MCF 10A (cell line): ENCODE measurements at regions of chr2 and their contacts with region 1.

Region 1: DNA sequence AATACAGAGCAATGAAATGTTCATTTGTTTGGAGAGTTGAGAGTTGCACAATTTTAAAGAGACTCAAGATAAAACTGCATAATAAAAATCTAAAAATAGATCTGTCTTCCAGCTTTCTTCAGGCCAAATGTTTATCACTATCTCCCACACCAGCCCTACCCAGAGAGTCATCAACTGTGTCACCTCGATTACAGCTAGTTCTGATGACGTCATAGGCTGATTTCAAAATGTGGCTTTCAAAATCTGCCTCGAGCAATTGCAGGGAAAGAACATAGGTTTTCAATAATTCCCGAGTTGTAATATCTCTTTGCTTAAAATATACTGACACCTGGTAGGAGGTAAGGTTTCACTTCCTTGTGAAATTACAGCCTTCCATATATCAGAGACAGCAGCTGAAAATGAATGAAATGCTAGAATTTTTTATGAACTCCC is 677.6 kb upstream of the ID2 start:
- DNase-seq: peak; percentile 83
- H3K4me3 Mint-ChIP-seq: no peak overlapping the region
- H3K27ac Mint-ChIP-seq: peak overlapping the region; percentile 76
- H3K4me1 Mint-ChIP-seq: peaks cover 15% of the 10 kb centered on the region
- H3K27me3 Mint-ChIP-seq: no peaks in the 10 kb centered on the region
- CTCF ChIP-seq: no peak

Region 2: DNA sequence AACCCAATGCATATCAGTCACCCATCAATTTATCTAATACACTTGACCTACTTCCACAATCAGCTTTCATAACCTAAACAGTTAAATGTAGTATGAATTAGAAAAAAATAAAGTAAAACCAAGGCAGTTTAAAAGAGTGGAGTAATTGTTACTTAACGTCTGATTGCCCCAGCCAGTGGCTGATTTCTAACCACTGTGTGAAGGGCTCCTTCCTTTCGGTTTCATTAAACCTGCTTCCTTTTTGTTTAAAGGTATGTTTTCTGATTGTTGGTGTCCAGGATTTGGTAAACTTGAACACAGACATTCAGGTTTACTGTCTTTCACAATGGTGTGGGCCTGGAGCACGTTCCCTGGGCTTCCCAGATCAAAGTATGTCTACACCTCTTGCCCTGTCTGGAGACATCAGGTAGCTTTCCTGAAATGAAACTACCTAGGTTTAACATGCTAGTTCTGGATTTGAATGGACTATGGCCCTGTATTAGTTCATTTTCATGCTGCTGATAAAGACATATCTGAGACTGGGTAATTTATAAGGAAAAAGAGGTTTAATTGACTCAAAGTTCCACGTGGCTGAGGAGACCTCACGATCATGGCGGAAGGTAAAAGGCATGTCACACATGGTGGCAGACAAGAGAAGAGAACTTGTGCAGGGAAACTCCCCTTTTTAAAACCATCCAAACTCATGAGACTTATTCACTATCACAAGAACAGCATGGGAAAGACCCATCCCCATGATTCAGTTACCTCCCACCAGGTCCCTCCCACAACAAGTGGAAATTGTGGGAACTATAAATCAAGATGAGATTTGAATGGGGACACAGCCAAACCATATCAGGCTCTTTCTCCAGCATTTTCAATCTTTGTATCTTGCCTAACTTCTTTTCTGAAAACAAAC is 72.4 kb after region 1 on chr2:
- CTCF ChIA-PET with region 1: no interaction called
- POLR2A ChIA-PET with region 1: no interaction called
- intact Hi-C with region 1: loop called (anchors 10 kb)
- DNase-seq: no peak
- H3K4me3 Mint-ChIP-seq: no peak overlapping the region
- H3K27ac Mint-ChIP-seq: no peak overlapping the region
- H3K4me1 Mint-ChIP-seq: no peaks in the 10 kb centered on the region
- H3K27me3 Mint-ChIP-seq: no peaks in the 10 kb centered on the region
- CTCF ChIP-seq: no peak

Region 3: DNA sequence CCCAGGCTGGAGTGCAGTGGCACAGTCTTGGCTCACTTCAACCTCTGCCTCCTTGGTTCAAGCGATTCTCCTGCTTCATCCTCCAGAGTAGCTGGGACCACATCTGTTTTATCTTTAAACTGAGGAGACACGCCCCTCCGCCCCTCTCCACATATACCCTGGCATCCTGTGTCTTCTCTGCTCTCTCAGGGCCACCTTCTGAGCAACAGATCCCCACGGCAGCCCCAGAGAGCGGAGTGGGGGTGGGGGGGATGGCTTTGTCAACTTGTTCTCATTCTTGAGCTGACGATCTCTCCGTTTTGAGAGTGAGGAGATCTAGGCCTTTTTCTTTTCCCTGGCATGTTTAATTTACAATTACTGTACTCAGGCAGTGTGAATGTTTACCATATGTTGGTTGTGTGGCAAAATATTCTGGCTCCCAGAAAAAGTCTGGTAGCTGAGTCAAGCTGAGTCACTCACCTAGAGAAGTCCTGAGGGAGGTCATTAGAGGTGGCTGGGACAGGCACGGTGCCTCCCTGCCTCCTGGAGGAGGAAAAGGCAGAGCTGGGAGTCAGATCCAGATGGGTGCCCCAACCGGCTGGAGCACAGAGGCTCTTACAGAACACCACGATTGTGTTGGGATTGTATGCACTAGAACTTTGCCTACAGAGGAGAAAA is 658.1 kb after region 1 on chr2:
- CTCF ChIA-PET with region 1: no interaction called
- POLR2A ChIA-PET with region 1: no interaction called
- intact Hi-C with region 1: loop called (anchors 5 kb)
- DNase-seq: peak; percentile 85
- H3K4me3 Mint-ChIP-seq: no peak overlapping the region
- H3K27ac Mint-ChIP-seq: peak overlapping the region; percentile 33
- H3K4me1 Mint-ChIP-seq: peaks cover 6% of the 10 kb centered on the region
- H3K27me3 Mint-ChIP-seq: no peaks in the 10 kb centered on the region
- CTCF ChIP-seq: peak; percentile 14